ENCODE measurements at regions of chr1 and their contacts with region 1.

Region 1: DNA sequence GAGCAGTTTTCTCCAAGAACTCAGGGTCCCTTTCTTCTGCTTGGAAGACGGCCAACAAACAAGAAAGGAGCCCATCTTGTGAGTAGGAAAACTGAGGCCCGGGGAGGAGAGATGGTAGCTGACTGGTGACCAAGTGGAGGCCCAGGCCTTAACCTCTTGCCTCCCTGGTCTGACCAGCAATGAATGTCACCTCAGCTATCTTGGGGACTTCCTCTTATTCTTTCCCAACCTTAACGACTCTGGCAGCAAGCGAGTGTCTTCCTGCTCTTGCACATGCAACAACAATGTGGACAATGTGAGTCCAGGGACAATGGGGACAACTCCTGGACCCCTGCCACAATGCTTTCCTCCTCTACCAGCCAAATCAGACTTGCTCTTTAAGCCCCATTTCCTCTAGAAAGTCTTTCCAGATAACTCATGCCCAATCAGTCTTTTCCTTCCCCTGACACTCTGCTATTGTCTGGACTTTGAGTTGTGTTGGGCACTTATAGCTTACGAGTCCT is 12.6 kb downstream of the HSPG2 start:
- DNase-seq: no peak
- ATAC-seq: no peak
- H3K4me3 ChIP-seq: no peak overlapping the region
- H3K27ac ChIP-seq: no peak overlapping the region
- H3K4me1 ChIP-seq: peaks cover 5% of the 10 kb centered on the region; the same call in 1 of the 2 replicates
- H3K27me3 ChIP-seq: no peaks in the 10 kb centered on the region
- CTCF ChIP-seq: no peak

Region 2: GRCh38 chr1:22983934-22984333 is 1059.4 kb after region 1 on chr1:
- CTCF ChIA-PET with region 1: no interaction called
- POLR2A ChIA-PET with region 1: interaction called, 14 read pairs
- intact Hi-C with region 1: no loop called
- DNase-seq: no peak
- ATAC-seq: no peak
- H3K4me3 ChIP-seq: no peak overlapping the region
- H3K27ac ChIP-seq: no peak overlapping the region
- H3K4me1 ChIP-seq: no peaks in the 10 kb centered on the region; the same call in 1 of the 2 replicates
- H3K27me3 ChIP-seq: no peaks in the 10 kb centered on the region
- CTCF ChIP-seq: no peak

Measured in PC-3 (cell line).